Calu3 (cell line): ENCODE measurements at regions of chr1 and their contacts with region 1.

Region 1: DNA sequence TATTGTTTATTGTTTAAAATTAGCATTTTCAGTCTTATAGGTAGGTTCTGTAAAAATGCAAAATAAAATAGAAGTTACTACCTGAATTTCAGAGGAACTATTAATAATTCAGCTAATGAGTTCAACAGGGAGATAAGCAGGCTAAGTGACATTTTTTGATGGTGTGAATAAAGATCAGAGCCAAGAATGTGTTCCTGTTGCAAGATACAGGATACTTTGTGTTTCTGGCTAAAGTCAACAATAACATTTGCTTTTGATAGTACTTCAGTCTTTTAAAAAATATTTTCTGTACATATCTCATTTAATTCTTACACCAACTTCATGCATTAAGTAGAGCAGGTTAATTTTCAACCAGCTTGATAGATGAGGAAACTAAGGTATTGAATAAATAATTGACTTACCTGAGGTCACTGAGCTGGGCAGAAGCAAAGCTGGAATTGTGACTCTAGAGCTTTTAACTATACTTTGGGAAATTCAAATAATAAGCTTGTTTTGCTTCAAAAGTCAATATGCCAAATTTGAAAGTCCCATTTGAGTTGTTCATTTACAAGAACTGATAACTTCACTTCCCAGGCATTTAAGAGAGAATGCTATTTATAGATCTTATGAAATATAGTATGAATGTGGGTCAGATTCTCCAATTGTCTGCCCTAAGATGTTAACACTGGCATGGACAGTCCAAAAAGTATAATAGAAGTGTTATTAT is 6.0 kb downstream of the GORAB start:
- DNase-seq: peak; percentile 20
- H3K4me3 Mint-ChIP-seq: peak overlapping the region; percentile 33
- H3K27ac Mint-ChIP-seq: peak overlapping the region; percentile 72
- H3K4me1 Mint-ChIP-seq: peaks cover 30% of the 10 kb centered on the region
- H3K27me3 Mint-ChIP-seq: no peaks in the 10 kb centered on the region
- CTCF ChIP-seq: no peak

Region 2: GRCh38 chr1:170010443-170010842 is 527.5 kb before region 1 on chr1:
- CTCF ChIA-PET with region 1: no interaction called
- intact Hi-C with region 1: loop called (anchors 5 kb)
- DNase-seq: peak; percentile 65
- H3K4me3 Mint-ChIP-seq: no peak overlapping the region
- H3K27ac Mint-ChIP-seq: no peak overlapping the region
- H3K4me1 Mint-ChIP-seq: no peaks in the 10 kb centered on the region
- H3K27me3 Mint-ChIP-seq: no peaks in the 10 kb centered on the region
- CTCF ChIP-seq: peak; percentile 46

Region 3: DNA sequence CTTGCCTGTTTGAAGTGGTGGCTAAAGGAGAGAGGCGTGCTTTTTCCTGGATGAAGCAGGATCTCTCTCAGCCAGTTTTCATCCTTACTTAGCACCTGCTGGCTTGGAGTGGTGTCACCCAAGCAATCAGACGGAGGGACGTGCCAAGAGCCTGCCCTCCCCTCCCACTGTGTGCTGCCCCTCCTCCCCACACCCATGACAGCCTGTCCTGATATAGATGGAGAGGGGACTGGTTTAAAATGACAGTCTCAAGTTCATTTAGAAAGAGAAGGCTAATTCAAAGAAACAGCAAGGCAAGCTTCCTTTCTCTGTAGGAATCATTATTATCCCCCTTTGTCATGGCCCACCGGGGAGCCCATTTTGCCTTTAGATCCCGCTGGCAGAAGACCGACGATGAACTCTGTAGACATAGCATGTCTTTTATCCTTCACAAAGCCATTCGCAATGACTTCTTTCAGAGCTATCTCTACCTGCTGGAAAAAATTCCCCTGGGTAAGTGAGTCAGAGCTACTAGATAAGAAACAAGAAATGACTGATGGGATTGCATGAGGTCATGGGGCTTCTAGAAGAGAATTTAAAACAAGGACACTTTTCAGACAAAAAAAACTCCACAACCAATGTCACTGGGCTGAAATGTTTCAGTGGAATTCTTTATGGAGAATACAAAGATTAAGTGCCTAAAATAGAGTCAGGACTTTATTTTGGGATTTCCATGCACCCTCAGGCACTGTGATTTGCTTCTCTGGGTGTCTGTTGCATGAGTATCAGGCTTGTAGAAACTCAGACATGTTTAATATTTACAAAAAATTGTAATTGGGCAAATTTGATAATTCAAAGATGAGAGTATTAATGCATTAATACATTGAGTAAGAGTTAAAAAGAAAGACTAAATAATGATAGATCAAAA is 391.9 kb before region 1 on chr1 and contains the start of gene NTMT2:
- CTCF ChIA-PET with region 1: no interaction called
- intact Hi-C with region 1: no loop called
- DNase-seq: no peak
- H3K4me3 Mint-ChIP-seq: no peak within 1 kb of the TSS
- H3K27ac Mint-ChIP-seq: no peak within 1 kb of the TSS
- H3K4me1 Mint-ChIP-seq: peaks cover 15% of the 10 kb centered on the region
- H3K27me3 Mint-ChIP-seq: no peaks in the 10 kb centered on the region
- CTCF ChIP-seq: no peak
- total RNA-seq, gene NTMT2: not detected in 2 replicates

Region 4: GRCh38 chr1:170619241-170620028 is 81.5 kb after region 1 on chr1:
- CTCF ChIA-PET with region 1: no interaction called
- intact Hi-C with region 1: loop called (anchors 5 kb)
- DNase-seq: peak; percentile 68
- H3K4me3 Mint-ChIP-seq: peak overlapping the region; percentile 16
- H3K27ac Mint-ChIP-seq: no peak overlapping the region
- H3K4me1 Mint-ChIP-seq: peaks cover 8% of the 10 kb centered on the region
- H3K27me3 Mint-ChIP-seq: no peaks in the 10 kb centered on the region
- CTCF ChIP-seq: no peak

Region 5: GRCh38 chr1:170664828-170665612 is 127.1 kb after region 1 on chr1:
- CTCF ChIA-PET with region 1: no interaction called
- intact Hi-C with region 1: loop called (anchors 5 kb)
- DNase-seq: peak; percentile 66
- H3K4me3 Mint-ChIP-seq: peak overlapping the region; percentile 99
- H3K27ac Mint-ChIP-seq: peak overlapping the region; percentile 68
- H3K4me1 Mint-ChIP-seq: peaks cover 25% of the 10 kb centered on the region
- H3K27me3 Mint-ChIP-seq: peaks cover 18% of the 10 kb centered on the region
- CTCF ChIP-seq: peak; percentile 21